Right cardiac atrium (tissue), 5 donors: ENCODE measurements at regions of chr19 and their contacts with region 1.

Region 1: DNA sequence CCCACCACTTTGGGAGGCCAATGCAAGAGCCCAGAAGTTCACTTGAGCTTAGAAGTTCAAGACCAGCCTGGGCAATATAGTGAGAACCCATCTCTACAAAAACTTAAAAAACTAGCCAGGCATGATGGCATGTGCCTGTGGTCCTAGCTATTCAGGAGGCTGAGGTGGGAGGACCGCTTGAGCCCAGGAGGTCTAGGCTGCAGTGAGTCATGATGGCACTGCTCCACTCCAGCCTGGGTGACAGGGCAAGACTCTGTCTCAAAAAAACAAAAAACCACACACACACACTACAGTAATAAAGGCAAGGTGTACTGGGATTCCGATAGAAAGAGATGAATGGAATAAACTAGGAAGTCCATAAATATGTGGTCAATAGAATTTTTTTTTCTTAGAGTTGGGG is 35.6 kb downstream of the CYP2F1 start:
- DNase-seq: no peak
- ATAC-seq: no peak
- H3K4me3 ChIP-seq: no peak overlapping the region
- H3K27ac ChIP-seq: no peak overlapping the region
- H3K4me1 ChIP-seq: no peaks in the 10 kb centered on the region
- H3K27me3 ChIP-seq: no peaks in the 10 kb centered on the region

Region 2: DNA sequence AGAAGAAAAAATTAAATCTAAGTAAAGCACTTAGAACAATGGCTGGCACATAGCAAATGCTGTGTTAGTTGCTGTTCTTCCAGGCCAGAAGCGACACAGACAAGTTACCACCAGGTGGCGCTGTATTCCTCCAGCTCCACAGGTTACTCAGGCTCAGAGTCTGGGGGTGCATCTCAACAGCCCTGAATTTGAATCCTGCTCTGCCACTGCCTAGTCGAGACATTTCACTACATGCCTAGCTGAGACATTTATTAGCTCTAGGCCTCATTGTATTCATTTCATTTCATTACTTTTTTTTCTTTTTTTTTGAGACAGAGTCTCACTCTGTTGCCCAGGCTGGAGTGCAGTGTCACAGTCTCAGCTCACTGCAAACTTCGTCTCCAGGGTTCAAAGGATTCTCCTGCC is 175.2 kb before region 1 on chr19:
- intact Hi-C with region 1: loop called in 3 of 4 experiments (anchors 5 to 10 kb)
- DNase-seq: peak; percentile 59 to 81 (median 77)
- ATAC-seq: peak; percentile 48 to 72
- H3K4me3 ChIP-seq: no peak overlapping the region
- H3K27ac ChIP-seq: no peak overlapping the region
- H3K4me1 ChIP-seq: no peaks in the 10 kb centered on the region
- H3K27me3 ChIP-seq: no peaks in the 10 kb centered on the region